Naive thymus-derived CD4-positive, alpha-beta T cell (primary cell): ENCODE measurements at regions of chr2 and their contacts with region 1.

Region 1: GRCh38 chr2:73385595-73386341 is at the start of gene ALMS1:
- DNase-seq: peak; percentile 80 to 91 (median 87)
- ATAC-seq: peak; percentile 94
- H3K4me3 ChIP-seq: peak within 1 kb of the TSS; percentile 85
- H3K4me3 Mint-ChIP-seq: peak within 1 kb of the TSS; percentile 81 to 96 (median 90)
- H3K27ac ChIP-seq: peak within 1 kb of the TSS; percentile 92
- H3K27ac Mint-ChIP-seq: peak within 1 kb of the TSS; percentile 93 to 98 (median 96)
- H3K4me1 ChIP-seq: peaks cover 4 to 18% of the 10 kb centered on the region in 2 donors
- H3K4me1 Mint-ChIP-seq: peaks cover 23 to 47% (median 44%) of the 10 kb centered on the region in 7 donors
- H3K27me3 ChIP-seq: no peaks in the 10 kb centered on the region
- H3K27me3 Mint-ChIP-seq: peaks cover 0 to 23% (median 0%) of the 10 kb centered on the region in 5 donors
- total RNA-seq, gene ALMS1: 16.3 to 46.7 (median 23.5) TPM

Region 2: GRCh38 chr2:72973566-72974435 is 412.0 kb before region 1 on chr2:
- CTCF ChIA-PET with region 1: no interaction called
- POLR2A ChIA-PET with region 1: no interaction called
- intact Hi-C with region 1: no loop called
- DNase-seq: peak in 6 of 9 donors; percentile 13 to 40 (median 20)
- ATAC-seq: peak; percentile 86
- H3K4me3 ChIP-seq: no peak overlapping the region
- H3K4me3 Mint-ChIP-seq: no peak overlapping the region
- H3K27ac ChIP-seq: no peak overlapping the region
- H3K27ac Mint-ChIP-seq: no peak overlapping the region
- H3K4me1 ChIP-seq: no peaks in the 10 kb centered on the region
- H3K4me1 Mint-ChIP-seq: no peaks in the 10 kb centered on the region
- H3K27me3 ChIP-seq: no peaks in the 10 kb centered on the region
- H3K27me3 Mint-ChIP-seq: peaks cover 0 to 7% (median 0%) of the 10 kb centered on the region in 5 donors

Region 3: GRCh38 chr2:73112913-73113633 is 272.7 kb before region 1 on chr2 and contains the start of gene RAB11FIP5:
- CTCF ChIA-PET with region 1: no interaction called
- POLR2A ChIA-PET with region 1: no interaction called
- intact Hi-C with region 1: loop called (anchors 5 kb)
- DNase-seq: peak; percentile 70 to 88 (median 76)
- ATAC-seq: peak; percentile 94
- H3K4me3 ChIP-seq: peak within 1 kb of the TSS; percentile 68
- H3K4me3 Mint-ChIP-seq: peak within 1 kb of the TSS; percentile 80 to 92 (median 88)
- H3K27ac ChIP-seq: peak within 1 kb of the TSS; percentile 61
- H3K27ac Mint-ChIP-seq: peak within 1 kb of the TSS in 8 of 9 donors; percentile 41 to 81 (median 74)
- H3K4me1 ChIP-seq: peaks cover 4 to 13% of the 10 kb centered on the region in 2 donors
- H3K4me1 Mint-ChIP-seq: peaks cover 9 to 33% (median 28%) of the 10 kb centered on the region in 7 donors
- H3K27me3 ChIP-seq: no peaks in the 10 kb centered on the region
- H3K27me3 Mint-ChIP-seq: peaks cover 0 to 14% (median 0%) of the 10 kb centered on the region in 5 donors
- total RNA-seq, gene RAB11FIP5: 8.6 to 13.2 (median 11.2) TPM

Region 4: DNA sequence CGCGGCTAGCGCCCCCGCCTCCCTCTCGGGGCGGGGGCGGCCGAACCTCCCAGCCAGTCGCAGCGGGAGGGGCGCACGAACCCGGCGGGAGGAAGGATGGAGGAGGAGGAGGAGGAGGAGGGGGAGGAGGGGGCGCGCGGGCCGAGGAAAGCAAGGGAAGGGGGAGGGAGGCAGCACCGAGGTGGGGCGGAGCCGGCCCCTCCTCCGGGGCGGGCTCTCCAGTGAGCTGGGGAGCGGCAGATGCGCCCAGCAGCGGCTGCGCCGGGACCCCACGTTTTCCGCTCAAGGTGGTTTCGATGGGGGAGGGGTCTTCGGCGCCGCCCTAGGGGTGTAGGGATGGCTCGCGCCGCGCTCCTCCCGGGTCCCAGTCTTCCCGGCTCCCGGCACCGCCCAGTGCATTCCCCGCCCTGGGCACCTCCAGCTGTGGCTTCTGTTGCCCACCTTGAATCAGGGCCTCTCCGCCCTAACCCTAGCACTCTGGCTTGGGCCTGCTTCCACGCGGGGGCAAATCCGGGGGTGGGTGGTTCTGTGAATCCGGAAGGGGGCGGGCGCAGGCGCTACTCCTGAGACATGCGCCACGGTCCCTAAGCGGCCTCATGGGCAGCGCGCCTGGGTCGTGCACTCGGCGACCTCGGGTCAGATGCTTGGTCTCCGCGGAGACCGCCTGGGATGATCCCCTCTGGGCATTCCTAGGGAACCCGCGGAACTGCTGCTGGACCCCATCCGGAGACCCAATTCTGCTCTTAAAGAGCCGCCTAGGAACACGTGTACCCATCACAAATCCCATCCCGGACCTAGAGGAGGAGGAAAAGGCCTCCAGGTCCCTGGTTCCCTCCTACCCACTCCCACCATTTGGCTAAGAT is 101.2 kb before region 1 on chr2 and contains the start of gene FBXO41:
- CTCF ChIA-PET with region 1: no interaction called
- POLR2A ChIA-PET with region 1: no interaction called
- intact Hi-C with region 1: loop called (anchors 1 kb)
- DNase-seq: peak; percentile 43 to 79 (median 61)
- ATAC-seq: peak; percentile 81
- H3K4me3 ChIP-seq: peak within 1 kb of the TSS; percentile 69
- H3K4me3 Mint-ChIP-seq: peak within 1 kb of the TSS; percentile 72 to 91 (median 85)
- H3K27ac ChIP-seq: peak within 1 kb of the TSS; percentile 61
- H3K27ac Mint-ChIP-seq: peak within 1 kb of the TSS in 7 of 9 donors; percentile 32 to 87 (median 58)
- H3K4me1 ChIP-seq: peaks cover 12 to 14% of the 10 kb centered on the region in 2 donors
- H3K4me1 Mint-ChIP-seq: peaks cover 6 to 26% (median 19%) of the 10 kb centered on the region in 7 donors
- H3K27me3 ChIP-seq: no peaks in the 10 kb centered on the region
- H3K27me3 Mint-ChIP-seq: peaks cover 0 to 34% (median 14%) of the 10 kb centered on the region in 5 donors
- total RNA-seq, gene FBXO41: 13.2 to 19.6 (median 17.6) TPM

Region 5: GRCh38 chr2:74178201-74179062 is 792.7 kb after region 1 on chr2 and contains the start of gene MOB1A:
- CTCF ChIA-PET with region 1: no interaction called
- POLR2A ChIA-PET with region 1: no interaction called
- intact Hi-C with region 1: loop called in 1 of 2 experiments (anchors 1 kb)
- DNase-seq: peak; percentile 94 to 98 (median 97)
- ATAC-seq: peak; percentile 97
- H3K4me3 ChIP-seq: peak within 1 kb of the TSS; percentile 89
- H3K4me3 Mint-ChIP-seq: peak within 1 kb of the TSS; percentile 86 to 95 (median 91)
- H3K27ac ChIP-seq: peak within 1 kb of the TSS; percentile 97
- H3K27ac Mint-ChIP-seq: peak within 1 kb of the TSS; percentile 82 to 95 (median 90)
- H3K4me1 ChIP-seq: peaks cover 25 to 37% of the 10 kb centered on the region in 2 donors
- H3K4me1 Mint-ChIP-seq: peaks cover 32 to 46% (median 35%) of the 10 kb centered on the region in 7 donors
- H3K27me3 ChIP-seq: no peaks in the 10 kb centered on the region
- H3K27me3 Mint-ChIP-seq: no peaks in the 10 kb centered on the region
- total RNA-seq, gene MOB1A: 113 to 185 (median 140) TPM

Region 6: GRCh38 chr2:74653985-74654882 is 1268.5 kb after region 1 on chr2 and contains the start of gene SEMA4F:
- CTCF ChIA-PET with region 1: no interaction called
- POLR2A ChIA-PET with region 1: no interaction called
- intact Hi-C with region 1: loop called in 1 of 2 experiments (anchors 1 kb)
- DNase-seq: peak; percentile 85 to 95 (median 92)
- ATAC-seq: peak; percentile 100
- H3K4me3 ChIP-seq: peak within 1 kb of the TSS; percentile 86
- H3K4me3 Mint-ChIP-seq: peak within 1 kb of the TSS; percentile 82 to 97 (median 90)
- H3K27ac ChIP-seq: peak within 1 kb of the TSS; percentile 75
- H3K27ac Mint-ChIP-seq: peak within 1 kb of the TSS in 8 of 9 donors; percentile 59 to 96 (median 85)
- H3K4me1 ChIP-seq: peaks cover 6 to 8% of the 10 kb centered on the region in 2 donors
- H3K4me1 Mint-ChIP-seq: peaks cover 12 to 34% (median 23%) of the 10 kb centered on the region in 7 donors
- H3K27me3 ChIP-seq: no peaks in the 10 kb centered on the region
- H3K27me3 Mint-ChIP-seq: peaks cover 3 to 21% (median 5%) of the 10 kb centered on the region in 5 donors
- total RNA-seq, gene SEMA4F: 5.7 to 23.6 (median 11.0) TPM